Heart right ventricle (tissue), 16 donors: ENCODE measurements at regions of chr2 and their contacts with region 1.

Region 1: DNA sequence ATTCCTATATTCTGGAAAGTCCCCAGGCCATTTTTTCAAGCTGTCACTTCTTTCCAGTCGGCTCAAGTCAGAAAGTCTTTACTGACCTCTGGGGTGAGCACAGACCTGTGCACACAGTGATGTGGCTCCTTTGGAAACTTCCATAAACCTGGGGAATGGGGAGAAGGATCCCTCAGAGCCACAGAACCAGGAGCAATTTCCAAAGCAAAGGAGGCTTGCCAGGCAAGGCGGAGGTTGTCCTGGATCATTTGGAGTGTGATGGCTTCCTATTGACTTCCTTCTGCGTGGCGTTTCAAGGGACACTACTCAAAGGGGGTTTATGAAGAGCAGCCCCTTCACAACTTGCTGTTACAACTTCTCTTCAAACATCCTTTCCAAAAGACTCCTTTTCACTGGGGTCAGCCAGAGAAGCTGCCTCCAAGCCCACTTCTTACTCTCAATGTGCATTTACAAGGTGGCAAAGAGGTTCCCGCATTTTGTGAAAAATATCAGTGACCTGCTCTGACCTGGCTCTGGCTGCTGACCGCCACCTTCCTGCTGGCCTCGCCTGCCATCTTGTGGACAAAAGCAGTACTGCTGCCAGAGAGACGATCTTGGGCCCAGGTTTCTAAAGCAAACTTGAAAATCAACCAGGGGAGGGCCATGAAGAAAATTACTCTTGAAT is 18.2 kb upstream of the TMEM247 start:
- DNase-seq: peak; percentile 81 to 83
- ATAC-seq: peak; percentile 47 to 85 (median 68)
- H3K4me3 ChIP-seq: no peak overlapping the region
- H3K27ac ChIP-seq: peak overlapping the region in 9 of 10 donors; percentile 34 to 79 (median 66)
- H3K4me1 ChIP-seq: peaks cover 11 to 48% (median 32%) of the 10 kb centered on the region in 9 donors
- H3K27me3 ChIP-seq: no peaks in the 10 kb centered on the region
- CTCF ChIP-seq: peak; percentile 98 to 100 (median 99)

Region 2: GRCh38 chr2:45993476-45993991 is 467.6 kb before region 1 on chr2:
- intact Hi-C with region 1: loop called in 5 of 10 experiments (anchors 1 to 2 kb)
- DNase-seq: peak in 1 of 2 donors; percentile 83
- ATAC-seq: peak; percentile 34 to 83 (median 65)
- H3K4me3 ChIP-seq: no peak overlapping the region
- H3K27ac ChIP-seq: no peak overlapping the region
- H3K4me1 ChIP-seq: peaks cover 2 to 29% (median 20%) of the 10 kb centered on the region in 9 donors
- H3K27me3 ChIP-seq: no peaks in the 10 kb centered on the region
- CTCF ChIP-seq: peak; percentile 57 to 91 (median 85)

Region 3: GRCh38 chr2:46010925-46011490 is 450.1 kb before region 1 on chr2:
- intact Hi-C with region 1: loop called in 2 of 10 experiments (anchors 2 kb)
- DNase-seq: no peak
- ATAC-seq: peak in 5 of 8 donors; percentile 45 to 77 (median 60)
- H3K4me3 ChIP-seq: no peak overlapping the region
- H3K27ac ChIP-seq: peak overlapping the region in 2 of 10 donors; percentile 19 to 22
- H3K4me1 ChIP-seq: peaks cover 0 to 43% (median 19%) of the 10 kb centered on the region in 9 donors
- H3K27me3 ChIP-seq: no peaks in the 10 kb centered on the region
- CTCF ChIP-seq: peak; percentile 21 to 81 (median 72)

Region 4: GRCh38 chr2:46377176-46377581 is 84.0 kb before region 1 on chr2:
- intact Hi-C with region 1: loop called in 5 of 10 experiments (anchors 5 to 10 kb)
- DNase-seq: peak in 1 of 2 donors; percentile 43
- ATAC-seq: peak in 7 of 8 donors; percentile 13 to 64 (median 27)
- H3K4me3 ChIP-seq: no peak overlapping the region
- H3K27ac ChIP-seq: peak overlapping the region in 8 of 10 donors; percentile 3 to 52 (median 38)
- H3K4me1 ChIP-seq: peaks cover 0 to 68% (median 13%) of the 10 kb centered on the region in 9 donors
- H3K27me3 ChIP-seq: no peaks in the 10 kb centered on the region
- CTCF ChIP-seq: peak in 2 of 9 donors; percentile 18 to 23

Region 5: DNA sequence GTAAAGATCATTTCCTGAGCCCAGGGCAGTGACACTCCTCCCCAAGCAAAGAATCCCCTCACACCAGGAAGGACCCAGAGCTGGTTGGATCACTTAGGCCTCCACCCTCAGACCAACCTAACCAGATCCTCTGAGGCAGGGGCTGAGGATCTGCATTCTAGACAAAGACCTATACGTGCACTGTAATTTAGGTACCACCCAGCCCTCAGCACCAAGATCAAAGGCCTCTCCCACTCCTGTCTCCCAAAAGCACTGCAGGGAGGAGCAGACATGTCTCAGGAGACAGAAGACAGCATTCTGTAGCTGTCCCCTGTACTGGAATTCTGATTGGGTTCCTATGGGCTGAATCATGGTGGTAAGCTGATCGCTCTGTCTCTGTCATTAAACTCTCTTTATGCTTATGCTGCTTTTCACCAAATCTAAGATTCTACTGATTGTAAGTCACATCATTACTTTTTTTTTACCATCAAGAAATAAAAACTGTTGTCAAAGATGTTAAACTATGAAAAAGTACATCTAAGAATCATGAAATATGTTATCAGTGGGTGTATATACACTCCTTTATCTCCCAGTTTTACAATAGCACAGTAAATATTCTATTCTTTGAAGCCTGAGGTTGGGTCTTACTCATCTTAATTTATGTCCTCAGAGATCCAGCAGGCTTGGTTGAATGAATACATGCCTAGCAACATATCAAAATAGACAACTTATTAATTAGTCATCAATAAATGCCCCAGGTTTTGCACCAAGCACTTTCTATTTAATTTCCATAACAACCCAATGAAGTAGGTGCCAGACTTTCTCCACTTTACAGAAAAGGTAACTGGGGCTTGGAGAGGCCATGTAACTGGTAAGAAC is 426.1 kb after region 1 on chr2:
- intact Hi-C with region 1: loop called in 3 of 10 experiments (anchors 2 to 5 kb)
- DNase-seq: no peak
- ATAC-seq: no peak
- H3K4me3 ChIP-seq: no peak overlapping the region
- H3K27ac ChIP-seq: peak overlapping the region in 5 of 10 donors; percentile 29 to 73 (median 49)
- H3K4me1 ChIP-seq: peaks cover 0 to 40% (median 12%) of the 10 kb centered on the region in 9 donors
- H3K27me3 ChIP-seq: no peaks in the 10 kb centered on the region
- CTCF ChIP-seq: no peak